Calu3 (cell line): ENCODE measurements at regions of chr11 and their contacts with region 1.

Region 1: GRCh38 chr11:24678703-24679357 is 182.0 kb downstream of the LUZP2 start:
- DNase-seq: no peak
- H3K4me3 Mint-ChIP-seq: no peak overlapping the region
- H3K27ac Mint-ChIP-seq: no peak overlapping the region
- H3K4me1 Mint-ChIP-seq: peaks cover 7% of the 10 kb centered on the region
- H3K27me3 Mint-ChIP-seq: no peaks in the 10 kb centered on the region
- CTCF ChIP-seq: no peak

Region 2: GRCh38 chr11:24043842-24044241 is 635.0 kb before region 1 on chr11:
- CTCF ChIA-PET with region 1: no interaction called
- intact Hi-C with region 1: loop called (anchors 5 kb)
- DNase-seq: no peak
- H3K4me3 Mint-ChIP-seq: no peak overlapping the region
- H3K27ac Mint-ChIP-seq: no peak overlapping the region
- H3K4me1 Mint-ChIP-seq: no peaks in the 10 kb centered on the region
- H3K27me3 Mint-ChIP-seq: no peaks in the 10 kb centered on the region
- CTCF ChIP-seq: no peak

Region 3: DNA sequence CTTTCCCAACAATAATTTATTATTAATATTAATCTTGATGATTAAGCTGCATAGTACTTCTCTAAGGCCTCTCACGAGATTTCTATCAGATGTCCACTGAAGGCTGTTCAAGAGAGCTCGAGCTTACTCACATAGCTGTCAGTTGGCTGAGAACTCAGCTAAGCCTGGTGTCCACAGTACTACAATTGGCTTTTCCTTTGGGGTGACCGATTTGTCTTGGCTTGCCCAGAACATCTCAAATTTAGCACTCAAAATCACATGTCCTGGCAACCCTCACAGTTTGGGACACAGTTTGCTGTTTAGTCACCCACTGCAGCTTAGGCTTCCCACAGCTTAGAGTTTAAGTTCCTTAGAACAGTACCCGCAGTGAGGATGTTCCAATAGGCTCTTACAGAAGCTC is 85.5 kb before region 1 on chr11:
- CTCF ChIA-PET with region 1: no interaction called
- intact Hi-C with region 1: no loop called
- DNase-seq: no peak
- H3K4me3 Mint-ChIP-seq: no peak overlapping the region
- H3K27ac Mint-ChIP-seq: no peak overlapping the region
- H3K4me1 Mint-ChIP-seq: peaks cover 24% of the 10 kb centered on the region
- H3K27me3 Mint-ChIP-seq: no peaks in the 10 kb centered on the region
- CTCF ChIP-seq: no peak

Region 4: GRCh38 chr11:24661331-24661730 is 17.5 kb before region 1 on chr11:
- CTCF ChIA-PET with region 1: no interaction called
- intact Hi-C with region 1: no loop called
- DNase-seq: no peak
- H3K4me3 Mint-ChIP-seq: no peak overlapping the region
- H3K27ac Mint-ChIP-seq: no peak overlapping the region
- H3K4me1 Mint-ChIP-seq: peaks cover 6% of the 10 kb centered on the region
- H3K27me3 Mint-ChIP-seq: no peaks in the 10 kb centered on the region
- CTCF ChIP-seq: no peak

Region 5: DNA sequence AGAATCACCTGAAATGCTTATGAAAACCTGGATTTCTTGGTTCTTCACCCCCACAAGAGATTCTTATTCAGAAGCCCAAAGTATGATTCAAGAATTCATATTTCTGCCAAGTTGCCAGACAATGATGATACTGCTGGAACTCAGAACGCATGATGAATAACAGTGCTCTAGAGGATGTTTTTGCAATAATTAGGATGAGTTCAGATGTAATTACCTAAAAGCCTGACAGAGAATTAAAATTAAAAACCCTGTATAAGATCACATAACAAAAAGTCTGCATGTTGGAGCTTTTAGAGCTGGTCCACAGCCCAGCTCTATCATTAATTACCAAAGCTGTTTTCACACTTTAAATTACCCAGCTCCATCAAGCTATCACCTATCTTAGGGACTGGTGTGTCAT is 29.8 kb after region 1 on chr11:
- CTCF ChIA-PET with region 1: no interaction called
- intact Hi-C with region 1: no loop called
- DNase-seq: no peak
- H3K4me3 Mint-ChIP-seq: no peak overlapping the region
- H3K27ac Mint-ChIP-seq: no peak overlapping the region
- H3K4me1 Mint-ChIP-seq: peaks cover 13% of the 10 kb centered on the region
- H3K27me3 Mint-ChIP-seq: no peaks in the 10 kb centered on the region
- CTCF ChIP-seq: no peak

Region 6: DNA sequence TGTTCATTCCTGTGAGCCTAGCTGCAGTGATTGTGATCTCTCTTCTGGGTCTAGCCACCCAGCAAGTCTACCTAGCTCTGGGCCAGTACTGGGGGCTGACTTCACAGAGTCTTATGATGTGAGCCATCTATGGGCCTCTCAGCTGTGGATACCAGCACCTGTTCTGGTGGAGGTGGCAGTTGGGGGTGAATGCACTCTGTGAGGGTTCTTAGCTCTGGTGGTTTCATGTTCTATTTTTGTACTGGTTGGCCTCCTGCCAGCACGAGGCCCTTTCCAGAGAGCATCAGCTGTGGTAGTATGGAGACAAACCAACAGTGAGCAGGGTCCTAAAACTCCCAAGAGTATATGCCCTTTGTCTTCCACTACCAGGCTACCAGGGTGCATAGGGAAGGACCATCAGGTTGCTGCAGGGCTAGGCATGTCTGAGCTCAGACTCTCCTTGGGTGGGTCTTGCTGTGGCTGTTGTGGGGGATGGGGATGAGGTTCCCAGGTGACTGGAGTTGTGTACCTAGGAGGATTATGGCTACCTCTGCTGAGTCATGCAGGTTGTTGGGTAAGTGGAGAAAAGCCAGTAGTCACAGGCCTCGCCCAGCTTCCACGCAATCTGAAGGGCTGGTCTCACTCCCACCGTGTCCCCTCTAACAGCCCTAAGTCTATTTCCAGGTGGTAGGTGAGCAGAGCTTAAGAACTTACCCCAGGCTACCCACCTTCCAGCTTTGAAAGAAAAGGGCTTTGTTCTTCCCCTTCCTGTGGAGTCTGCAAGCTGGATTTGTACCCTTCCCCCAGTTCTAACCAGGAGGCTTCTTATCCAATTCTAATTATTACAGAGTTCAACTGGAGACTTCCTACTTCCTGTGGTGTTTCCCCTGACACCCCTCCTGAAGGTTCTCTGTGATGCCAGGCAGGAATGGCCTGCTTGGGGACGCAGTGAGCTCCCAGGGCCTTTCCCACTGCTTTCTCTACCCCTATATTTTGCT is 68.7 kb after region 1 on chr11:
- CTCF ChIA-PET with region 1: no interaction called
- intact Hi-C with region 1: no loop called
- DNase-seq: no peak
- H3K4me3 Mint-ChIP-seq: no peak overlapping the region
- H3K27ac Mint-ChIP-seq: no peak overlapping the region
- H3K4me1 Mint-ChIP-seq: no peaks in the 10 kb centered on the region
- H3K27me3 Mint-ChIP-seq: no peaks in the 10 kb centered on the region
- CTCF ChIP-seq: no peak